Activated T-helper 1 cell treated with anti-CD3 and anti-CD28 coated beads, Interleukin-12 subunit alpha, Interleukin-12 subunit beta, Interleukin-2, Interleukin-4 antibody, amounts not matched to agents 30 ng/mL and 10 ng/mL and 1 ng/mL, durations not matched to agents 14 hours and 24 hours and 36 hours (primary cell): ENCODE measurements at regions of chr9 and their contacts with region 1.

Region 1: DNA sequence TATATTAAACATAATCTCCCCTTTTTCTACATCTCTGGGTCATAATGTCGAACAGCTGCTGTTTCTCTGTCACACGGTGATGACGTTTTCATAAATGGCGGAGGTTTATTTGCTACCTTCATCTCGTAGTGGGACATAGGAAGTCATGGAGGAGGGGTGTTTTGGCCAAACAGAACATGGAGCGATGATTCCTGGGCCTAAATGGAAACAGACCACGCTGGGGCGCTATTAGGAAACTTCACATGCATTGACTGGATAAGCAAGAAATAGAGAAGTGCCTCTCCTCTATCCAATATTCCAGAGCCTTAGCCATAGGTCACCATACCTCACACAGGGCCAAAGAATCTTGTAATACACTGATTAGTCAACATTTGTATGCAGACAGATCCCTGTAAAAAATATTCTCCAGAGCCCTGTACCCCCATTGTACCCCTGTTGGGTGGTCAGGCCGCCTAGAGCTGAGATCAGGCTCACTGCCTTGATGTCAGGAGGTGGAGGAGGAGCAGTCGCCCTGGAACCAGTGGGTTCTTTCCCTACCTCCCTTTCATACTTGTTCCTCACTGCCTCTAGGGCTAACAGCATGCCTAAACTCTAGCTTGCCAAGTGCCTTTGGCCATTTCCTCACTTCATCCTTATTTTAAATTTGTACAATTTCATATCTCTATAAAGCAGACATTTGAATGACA is 77.8 kb upstream of the SPIN1 start:
- DNase-seq: no peak
- H3K4me3 Mint-ChIP-seq: no peak overlapping the region
- H3K27ac Mint-ChIP-seq: peak overlapping the region; percentile 48
- H3K4me1 Mint-ChIP-seq: peaks cover 70% of the 10 kb centered on the region
- H3K27me3 Mint-ChIP-seq: peaks cover 1% of the 10 kb centered on the region

Region 2: GRCh38 chr9:88197781-88198340 is 112.6 kb before region 1 on chr9:
- intact Hi-C with region 1: no loop called
- DNase-seq: no peak
- H3K4me3 Mint-ChIP-seq: no peak overlapping the region
- H3K27ac Mint-ChIP-seq: no peak overlapping the region
- H3K4me1 Mint-ChIP-seq: no peaks in the 10 kb centered on the region
- H3K27me3 Mint-ChIP-seq: peaks cover 17% of the 10 kb centered on the region

Region 3: DNA sequence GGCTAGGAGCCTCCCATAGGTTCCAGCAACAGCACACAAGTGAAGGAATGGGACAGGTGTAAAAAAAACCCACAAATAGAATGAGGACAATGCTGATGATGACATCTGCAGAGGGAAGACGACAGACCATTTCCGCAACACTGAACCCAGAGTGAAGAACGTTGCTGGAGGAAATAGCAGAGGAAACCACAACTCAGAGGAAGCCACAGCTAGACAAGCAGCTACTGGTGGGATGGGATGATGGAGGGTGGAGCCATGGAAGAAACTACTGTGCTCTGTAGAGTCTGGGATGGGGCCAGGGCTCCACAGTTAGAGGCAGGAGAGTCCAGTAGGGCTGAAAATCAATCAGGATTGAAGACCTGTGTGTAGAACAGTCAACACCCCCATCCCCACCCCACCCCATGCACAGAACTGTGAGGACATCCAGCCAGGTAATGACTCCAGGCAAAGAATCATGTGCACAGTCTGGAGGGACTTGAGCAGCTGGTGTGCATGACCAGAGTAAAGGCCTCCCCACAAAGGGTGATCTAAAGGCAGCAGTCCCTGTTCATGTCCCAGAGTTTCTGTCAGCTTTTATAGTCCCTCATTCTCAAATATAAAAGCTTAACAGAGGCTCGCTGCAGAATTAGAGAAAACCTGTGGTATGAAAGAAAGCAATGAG is 12.6 kb after region 1 on chr9:
- intact Hi-C with region 1: loop called (anchors 1 kb)
- DNase-seq: peak; percentile 68
- H3K4me3 Mint-ChIP-seq: peak overlapping the region; percentile 64
- H3K27ac Mint-ChIP-seq: peak overlapping the region; percentile 83
- H3K4me1 Mint-ChIP-seq: peaks cover 45% of the 10 kb centered on the region
- H3K27me3 Mint-ChIP-seq: no peaks in the 10 kb centered on the region